RWPE1 (cell line): ENCODE measurements at regions of chr20 and their contacts with region 1.

Region 1: DNA sequence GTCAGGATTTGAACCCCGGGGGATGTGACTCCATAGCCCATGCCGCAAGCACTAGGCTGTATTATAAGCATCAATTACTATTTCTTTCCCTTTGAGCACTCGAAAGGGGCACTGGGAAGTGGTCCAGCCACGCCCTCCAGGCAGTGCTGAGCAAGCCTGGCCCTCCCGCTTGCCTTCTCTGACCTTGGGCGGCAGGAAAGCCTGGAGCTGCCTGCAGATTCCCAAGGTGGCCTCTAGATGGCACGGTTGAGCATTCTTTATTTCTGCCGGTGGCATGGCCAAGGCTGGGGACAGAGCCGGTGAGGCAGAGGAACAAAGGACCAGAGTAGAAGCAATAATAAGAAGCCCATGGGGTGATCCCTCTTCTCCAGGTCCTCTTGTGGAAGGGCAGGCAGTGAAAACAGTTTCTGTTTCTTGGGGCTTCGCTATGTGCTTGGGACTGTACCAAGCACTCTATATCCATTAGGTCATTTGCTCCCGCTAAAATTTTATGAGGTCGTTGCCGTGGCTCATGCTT is 32.0 kb downstream of the ARHGAP40 start:
- DNase-seq: peak; percentile 88
- H3K27ac ChIP-seq: no peak overlapping the region
- CTCF ChIP-seq: peak; percentile 99

Region 2: DNA sequence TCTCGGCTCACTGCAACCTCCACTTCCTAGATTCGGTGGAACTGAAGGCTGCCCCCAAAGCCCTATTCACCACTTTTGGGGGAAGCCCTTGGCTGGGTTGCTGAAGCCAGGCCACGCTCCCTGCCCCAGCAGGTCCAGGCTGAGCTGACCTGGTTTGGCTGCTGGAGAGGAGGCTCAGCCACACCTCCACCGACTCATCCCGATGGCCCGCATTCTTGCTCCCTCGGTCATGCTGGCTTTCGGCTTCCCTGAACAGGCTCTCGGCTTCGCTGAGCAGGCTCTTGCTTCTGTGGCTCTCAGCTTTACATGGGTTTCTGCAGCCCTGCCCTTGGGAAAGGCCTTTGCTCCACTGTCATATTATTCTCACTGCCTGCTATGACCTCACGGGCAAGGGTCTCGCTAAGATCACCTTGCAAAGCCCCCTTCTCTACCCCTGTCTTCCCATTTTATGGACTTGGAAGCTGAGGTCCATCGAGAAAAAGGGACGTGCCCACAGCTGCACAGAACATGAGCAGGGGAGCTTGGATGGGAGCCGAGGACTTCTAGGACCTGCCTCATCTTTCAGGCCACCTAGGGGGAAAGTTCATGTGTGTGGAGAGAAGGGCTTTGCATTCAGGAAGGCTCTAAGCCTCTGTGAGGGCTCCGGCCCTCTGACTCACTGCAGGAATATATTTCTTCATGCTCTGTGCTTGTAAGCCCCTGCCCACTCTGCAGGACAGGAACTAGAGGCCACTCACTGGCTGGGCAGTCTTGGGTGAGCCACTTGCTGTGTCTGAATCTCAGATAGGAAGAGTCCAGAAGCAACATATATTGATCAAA is 16.4 kb before region 1 on chr20:
- CTCF ChIA-PET with region 1: interaction called, 10 read pairs
- POLR2A ChIA-PET with region 1: no interaction called
- DNase-seq: peak; percentile 98
- H3K27ac ChIP-seq: no peak overlapping the region
- CTCF ChIP-seq: no peak